PC-9 (cell line): ENCODE measurements at regions of chr12 and their contacts with region 1.

Region 1: DNA sequence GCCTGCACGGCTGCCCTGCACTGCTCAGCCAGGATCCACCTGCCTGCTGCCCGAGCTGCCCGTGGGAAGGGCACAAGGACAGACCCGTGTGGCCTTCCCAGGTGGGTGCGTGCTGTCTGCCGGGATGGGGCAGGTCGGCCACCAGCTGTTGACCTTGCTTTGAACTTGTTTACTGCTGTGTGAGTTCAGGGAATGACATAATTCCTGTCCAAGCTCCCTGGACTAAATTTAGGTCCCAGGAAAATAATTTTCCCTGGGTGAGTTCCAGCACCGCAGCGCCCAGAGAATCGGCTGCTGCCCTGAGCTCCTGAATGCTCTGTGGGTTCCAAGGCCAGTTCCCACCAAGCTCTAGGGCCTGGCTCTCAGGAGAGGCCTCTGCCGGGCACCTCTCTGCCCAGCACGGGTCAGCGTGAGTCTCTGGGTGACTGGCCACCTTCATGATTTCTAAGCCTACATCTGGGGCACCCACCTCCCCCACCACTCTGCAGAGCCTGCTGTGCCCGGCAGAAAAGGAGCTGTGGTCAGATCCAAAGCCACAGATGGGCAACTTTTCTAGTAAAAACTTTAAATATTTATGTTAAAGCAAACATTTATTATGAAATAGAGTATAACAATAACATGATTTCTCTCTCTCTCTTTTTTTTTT is 27.2 kb upstream of the MLXIP start:
- DNase-seq: no peak
- H3K4me3 ChIP-seq: no peak overlapping the region
- H3K27ac ChIP-seq: no peak overlapping the region
- H3K4me1 ChIP-seq: no peaks in the 10 kb centered on the region
- H3K27me3 ChIP-seq: no peaks in the 10 kb centered on the region
- CTCF ChIP-seq: no peak

Region 2: GRCh38 chr12:122123051-122123760 is 71.9 kb after region 1 on chr12:
- CTCF ChIA-PET with region 1: interaction called, 4 read pairs
- POLR2A ChIA-PET with region 1: no interaction called
- intact Hi-C with region 1: loop called (anchors 1 kb)
- DNase-seq: peak; percentile 53 to 70
- H3K4me3 ChIP-seq: no peak overlapping the region
- H3K27ac ChIP-seq: peak overlapping the region; percentile 49
- H3K4me1 ChIP-seq: peaks cover 5% of the 10 kb centered on the region; the same call in 1 of the 2 replicates
- H3K27me3 ChIP-seq: no peaks in the 10 kb centered on the region
- CTCF ChIP-seq: peak; percentile 89

Region 3: DNA sequence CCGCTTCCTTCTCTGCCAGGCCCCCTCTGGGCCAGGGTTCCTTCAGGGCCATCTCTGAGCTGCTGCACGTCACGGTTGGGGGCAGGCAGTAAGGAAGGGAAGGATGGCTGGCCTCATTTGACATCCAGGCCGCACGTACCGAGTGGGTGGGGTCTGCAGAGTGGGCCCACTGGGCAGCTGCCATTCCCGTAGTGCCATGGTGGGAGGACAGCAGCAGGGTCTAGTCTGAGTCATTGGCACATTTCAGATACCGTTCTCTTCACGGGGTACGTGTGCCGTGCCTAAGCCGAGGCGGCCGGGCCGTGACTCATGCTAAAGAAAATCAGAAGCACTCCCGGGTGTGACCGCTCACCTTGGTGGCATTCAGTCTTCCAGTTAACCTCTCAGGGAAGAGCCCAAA is 78.8 kb after region 1 on chr12:
- CTCF ChIA-PET with region 1: no interaction called
- POLR2A ChIA-PET with region 1: no interaction called
- intact Hi-C with region 1: loop called (anchors 1 kb)
- DNase-seq: peak; percentile 72 to 74
- H3K4me3 ChIP-seq: no peak overlapping the region
- H3K27ac ChIP-seq: peak overlapping the region; percentile 40; the same call in 1 of the 2 replicates
- H3K4me1 ChIP-seq: peaks cover 14% of the 10 kb centered on the region
- H3K27me3 ChIP-seq: no peaks in the 10 kb centered on the region
- CTCF ChIP-seq: no peak

Region 4: GRCh38 chr12:122190842-122191668 is 139.7 kb after region 1 on chr12:
- CTCF ChIA-PET with region 1: interaction called, 9 read pairs
- POLR2A ChIA-PET with region 1: no interaction called
- intact Hi-C with region 1: loop called (anchors 1 kb)
- DNase-seq: peak; percentile 57 to 77
- H3K4me3 ChIP-seq: no peak overlapping the region
- H3K27ac ChIP-seq: no peak overlapping the region
- H3K4me1 ChIP-seq: no peaks in the 10 kb centered on the region
- H3K27me3 ChIP-seq: no peaks in the 10 kb centered on the region
- CTCF ChIP-seq: peak; percentile 82

Region 5: DNA sequence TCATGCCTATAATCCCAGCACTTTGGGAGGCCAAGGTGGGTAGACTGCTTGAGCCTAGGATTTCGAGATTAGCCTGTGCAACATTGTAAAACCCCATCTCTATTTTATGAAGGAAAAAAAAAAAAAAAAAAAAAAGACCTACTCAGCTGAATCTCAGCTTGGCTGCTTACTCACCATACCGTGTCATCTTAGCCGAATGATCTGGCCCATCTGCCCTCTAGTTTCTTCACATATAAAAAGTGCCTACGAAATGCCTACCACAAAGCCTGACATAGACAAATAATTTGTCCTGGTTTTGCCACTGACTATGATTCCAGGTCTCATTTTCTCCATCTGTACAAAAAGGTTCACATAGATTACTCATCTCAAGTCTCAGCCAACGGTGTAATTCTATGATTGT is 164.4 kb after region 1 on chr12:
- CTCF ChIA-PET with region 1: interaction called, 15 read pairs
- POLR2A ChIA-PET with region 1: no interaction called
- intact Hi-C with region 1: no loop called
- DNase-seq: no peak
- H3K4me3 ChIP-seq: no peak overlapping the region
- H3K27ac ChIP-seq: no peak overlapping the region
- H3K4me1 ChIP-seq: no peaks in the 10 kb centered on the region
- H3K27me3 ChIP-seq: no peaks in the 10 kb centered on the region
- CTCF ChIP-seq: no peak